HCT116 (cell line): ENCODE measurements at regions of chr1 and their contacts with region 1.

Region 1: GRCh38 chr1:155978325-155978972 is at the start of gene ARHGEF2:
- DNase-seq: no peak
- ATAC-seq: peak; percentile 80
- H3K4me3 ChIP-seq: peak within 1 kb of the TSS; percentile 87 to 91
- H3K27ac ChIP-seq: peak within 1 kb of the TSS; percentile 85
- H3K4me1 ChIP-seq: peaks cover 54 to 70% of the 10 kb centered on the region in 2 experiments
- H3K27me3 ChIP-seq: no peaks in the 10 kb centered on the region
- CTCF ChIP-seq: 0 out of 6 replicates have a peak, but pooled peaks of 1 of the 3 experiments have one; percentile 8
- POLR2A ChIP-seq: no peak
- RAD21 ChIP-seq: no peak
- total RNA-seq, gene ARHGEF2: 90.1 TPM

Region 2: DNA sequence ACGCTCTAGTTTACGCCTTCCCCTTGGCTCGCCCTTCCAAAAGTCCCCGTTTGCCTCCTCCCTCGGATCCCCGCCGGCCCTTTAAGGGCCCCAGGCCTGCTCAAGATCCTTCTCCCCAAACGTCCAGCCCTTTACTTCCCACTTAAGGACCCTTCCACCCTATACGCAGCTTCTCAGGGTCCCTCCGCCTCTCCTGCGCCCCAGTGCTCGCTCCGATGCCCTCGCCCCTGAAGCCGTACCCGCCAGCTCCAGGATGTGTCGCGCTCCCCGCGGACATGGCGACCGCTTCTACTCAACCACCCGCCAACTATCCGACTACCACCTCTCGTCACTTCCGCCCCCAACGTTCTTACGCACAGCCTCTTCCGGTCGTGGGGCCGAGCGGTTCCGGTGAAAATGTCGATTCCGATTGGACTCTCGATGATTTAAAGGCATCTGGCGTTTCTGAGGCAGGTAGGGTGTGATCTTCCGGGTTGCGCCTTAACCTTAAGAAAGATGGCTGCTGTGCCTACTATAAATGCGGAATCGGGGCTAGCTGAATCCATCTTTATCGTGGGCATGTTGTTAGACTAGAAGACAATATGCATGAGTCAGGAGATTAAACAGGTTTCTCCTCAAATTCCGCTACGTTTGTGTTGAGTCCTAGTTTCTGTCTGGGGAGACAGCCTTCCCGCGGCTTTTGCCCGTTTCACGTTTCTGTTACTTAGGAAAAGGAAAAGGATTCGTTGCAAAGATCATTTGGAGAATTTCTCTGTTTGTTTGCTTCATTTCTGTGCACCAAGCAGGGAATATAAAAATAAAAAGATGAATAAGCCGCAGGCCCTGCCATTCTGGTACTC is 44.1 kb before region 1 on chr1 and contains the start of gene KHDC4:
- CTCF ChIA-PET with region 1: interaction called, 22 read pairs
- POLR2A ChIA-PET with region 1: interaction called, 20 read pairs
- RAD21 ChIA-PET with region 1: no interaction called
- intact Hi-C with region 1: no loop called
- DNase-seq: peak; percentile 98
- ATAC-seq: peak; percentile 89
- H3K4me3 ChIP-seq: peak within 1 kb of the TSS; percentile 99
- H3K27ac ChIP-seq: peak within 1 kb of the TSS; percentile 67
- H3K4me1 ChIP-seq: peaks cover 23 to 42% of the 10 kb centered on the region in 2 experiments
- H3K27me3 ChIP-seq: no peaks in the 10 kb centered on the region
- CTCF ChIP-seq: 0 out of 6 replicates have a peak, but pooled peaks of 1 of the 3 experiments have one; percentile 6
- POLR2A ChIP-seq: peak; percentile 81
- RAD21 ChIP-seq: no peak
- total RNA-seq, gene KHDC4: 60.7 TPM

Region 3: GRCh38 chr1:155940531-155940992 is 37.9 kb before region 1 on chr1:
- CTCF ChIA-PET with region 1: interaction called, 22 read pairs
- POLR2A ChIA-PET with region 1: interaction called, 20 read pairs
- RAD21 ChIA-PET with region 1: interaction called in 1 of 2 experiments, 3 read pairs
- intact Hi-C with region 1: no loop called
- DNase-seq: no peak
- ATAC-seq: peak; percentile 68
- H3K4me3 ChIP-seq: peak overlapping the region; percentile 24 to 40
- H3K27ac ChIP-seq: peak overlapping the region; percentile 96
- H3K4me1 ChIP-seq: peaks cover 49 to 67% of the 10 kb centered on the region in 2 experiments
- H3K27me3 ChIP-seq: no peaks in the 10 kb centered on the region
- CTCF ChIP-seq: no peak
- POLR2A ChIP-seq: peak; percentile 31
- RAD21 ChIP-seq: no peak

Region 4: DNA sequence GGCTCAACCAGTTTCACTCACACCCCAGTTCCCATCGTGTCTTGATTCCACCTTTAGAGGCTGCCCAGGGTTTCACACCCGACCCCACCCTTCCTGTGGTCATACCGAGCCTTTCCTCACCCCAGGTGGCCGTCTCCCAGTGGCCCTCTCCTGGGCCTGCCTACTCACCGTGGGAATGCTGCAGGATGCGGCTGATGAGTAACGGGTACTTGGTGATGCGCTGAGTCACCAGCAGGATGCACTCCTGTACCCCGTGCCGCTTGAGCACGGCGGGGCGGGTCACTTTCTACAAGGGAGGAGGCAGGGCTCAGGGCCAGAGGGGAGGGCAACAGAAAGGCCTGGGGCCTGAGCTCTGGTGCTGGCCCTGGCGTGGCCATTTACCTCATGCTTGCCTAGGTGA is 16.5 kb before region 1 on chr1:
- CTCF ChIA-PET with region 1: interaction called, 4 read pairs
- POLR2A ChIA-PET with region 1: interaction called, 28 read pairs
- RAD21 ChIA-PET with region 1: interaction called, 3 read pairs
- intact Hi-C with region 1: loop called (anchors 2 kb)
- DNase-seq: peak; percentile 92
- ATAC-seq: peak; percentile 98
- H3K4me3 ChIP-seq: peak overlapping the region; percentile 11 to 48; a peak in 3 of 4 replicates
- H3K27ac ChIP-seq: peak overlapping the region; percentile 56
- H3K4me1 ChIP-seq: peaks cover 24 to 40% of the 10 kb centered on the region in 2 experiments
- H3K27me3 ChIP-seq: no peaks in the 10 kb centered on the region
- CTCF ChIP-seq: peak in 1 of 3 experiments; percentile 36; a peak in 1 of 6 replicates
- POLR2A ChIP-seq: no peak
- RAD21 ChIP-seq: peak; percentile 65

Region 5: GRCh38 chr1:155989242-155990004 is 11.0 kb after region 1 on chr1:
- CTCF ChIA-PET with region 1: interaction called, 15 read pairs
- POLR2A ChIA-PET with region 1: interaction called, 6 read pairs
- RAD21 ChIA-PET with region 1: no interaction called
- intact Hi-C with region 1: no loop called
- DNase-seq: no peak
- ATAC-seq: peak; percentile 95
- H3K4me3 ChIP-seq: no peak overlapping the region
- H3K27ac ChIP-seq: peak overlapping the region; percentile 10; the same call in 1 of the 2 replicates
- H3K4me1 ChIP-seq: peaks cover 0 to 5% of the 10 kb centered on the region in 2 experiments; a peak in 2 of 4 replicates
- H3K27me3 ChIP-seq: no peaks in the 10 kb centered on the region
- CTCF ChIP-seq: peak; percentile 90 to 98 (median 97)
- POLR2A ChIP-seq: no peak
- RAD21 ChIP-seq: peak; percentile 96